ENCODE measurements at regions of chr10 and their contacts with region 1.

Region 1: GRCh38 chr10:102796407-102797176 is 40.6 kb downstream of the CYP17A1 start:
- DNase-seq: peak; percentile 96

Region 2: DNA sequence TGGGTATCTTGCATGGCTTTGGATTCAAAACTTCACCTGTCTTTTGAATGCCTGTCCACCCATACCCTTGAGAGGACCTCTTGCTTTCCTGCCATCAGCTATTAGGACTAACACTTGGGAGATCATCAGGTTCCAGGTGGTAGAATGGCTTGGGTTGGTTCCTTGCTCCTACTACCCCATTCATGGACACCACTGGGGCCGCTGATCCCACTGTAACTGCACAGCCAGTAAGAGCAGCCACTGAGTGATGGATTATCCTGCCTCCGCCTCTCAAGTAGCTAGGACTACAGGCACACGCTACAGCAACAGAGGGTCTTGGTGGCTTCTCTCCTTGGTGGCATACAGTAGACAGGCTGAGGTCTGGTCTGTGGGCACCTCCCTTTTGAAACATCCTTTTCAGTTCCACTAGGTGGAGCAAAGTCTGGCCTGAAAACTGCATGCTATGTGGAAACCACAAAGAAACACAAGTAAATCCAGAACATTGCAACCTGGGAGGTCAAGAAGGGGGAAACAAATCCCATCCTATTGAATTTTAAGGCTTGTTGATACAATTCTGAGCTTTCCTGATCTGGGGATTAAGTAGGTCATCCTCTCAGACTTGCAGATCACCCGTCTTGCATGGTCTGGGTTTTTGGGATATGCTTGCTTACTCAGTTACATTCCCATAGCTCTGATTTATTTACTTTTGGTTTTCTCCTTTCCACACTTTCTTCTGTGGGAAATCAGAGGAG is 43.5 kb before region 1 on chr10:
- intact Hi-C with region 1: loop called (anchors 2 kb)
- DNase-seq: no peak

Measured in cardiac septum (tissue), 1 donor.